ENCODE measurements at regions of chr17 and their contacts with region 1.

Region 1: DNA sequence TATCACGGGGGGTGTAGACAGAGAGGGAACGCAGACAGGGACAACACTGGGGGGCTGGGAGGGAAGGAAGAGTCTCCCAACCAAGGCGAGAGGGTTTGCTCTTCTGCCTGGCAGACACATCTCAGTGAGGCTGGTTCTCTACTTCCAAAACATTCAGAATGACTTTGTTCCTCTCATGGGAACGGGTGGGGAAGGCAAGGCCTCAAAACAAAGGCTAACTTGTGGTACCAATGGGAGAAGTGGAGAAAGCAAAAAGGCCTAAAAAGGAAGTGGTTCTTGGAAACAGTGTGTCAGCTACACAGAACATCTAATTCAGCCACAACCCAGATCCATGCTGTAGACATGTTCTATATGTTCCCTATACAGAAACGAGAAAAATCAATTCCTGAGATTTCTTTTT is 7.5 kb downstream of the FLOT2 start:
- DNase-seq: no peak
- ATAC-seq: no peak
- H3K4me3 Mint-ChIP-seq: peak overlapping the region in 2 of 10 donors; percentile 10 to 14
- H3K27ac Mint-ChIP-seq: peak overlapping the region in 9 of 10 donors; percentile 37 to 98 (median 77)
- H3K4me1 Mint-ChIP-seq: peaks cover 27 to 69% (median 56%) of the 10 kb centered on the region in 4 donors
- H3K27me3 Mint-ChIP-seq: no peaks in the 10 kb centered on the region

Region 2: GRCh38 chr17:28871056-28871579 is 18.9 kb before region 1 on chr17:
- POLR2A ChIA-PET with region 1: interaction called, 20 read pairs
- DNase-seq: peak in 7 of 10 donors; percentile 3 to 58 (median 33)
- ATAC-seq: peak; percentile 100
- H3K4me3 Mint-ChIP-seq: peak overlapping the region in 9 of 10 donors; percentile 48 to 80 (median 61)
- H3K27ac Mint-ChIP-seq: peak overlapping the region; percentile 86 to 100 (median 96)
- H3K4me1 Mint-ChIP-seq: peaks cover 7 to 18% (median 13%) of the 10 kb centered on the region in 4 donors
- H3K27me3 Mint-ChIP-seq: no peaks in the 10 kb centered on the region

Region 3: GRCh38 chr17:28878981-28879380 is 11.0 kb before region 1 on chr17:
- POLR2A ChIA-PET with region 1: interaction called, 16 read pairs
- DNase-seq: no peak
- ATAC-seq: peak; percentile 33 to 38
- H3K4me3 Mint-ChIP-seq: no peak overlapping the region
- H3K27ac Mint-ChIP-seq: peak overlapping the region in 2 of 10 donors; percentile 24 to 53
- H3K4me1 Mint-ChIP-seq: peaks cover 0 to 5% (median under 1%) of the 10 kb centered on the region in 4 donors
- H3K27me3 Mint-ChIP-seq: no peaks in the 10 kb centered on the region

Region 4: DNA sequence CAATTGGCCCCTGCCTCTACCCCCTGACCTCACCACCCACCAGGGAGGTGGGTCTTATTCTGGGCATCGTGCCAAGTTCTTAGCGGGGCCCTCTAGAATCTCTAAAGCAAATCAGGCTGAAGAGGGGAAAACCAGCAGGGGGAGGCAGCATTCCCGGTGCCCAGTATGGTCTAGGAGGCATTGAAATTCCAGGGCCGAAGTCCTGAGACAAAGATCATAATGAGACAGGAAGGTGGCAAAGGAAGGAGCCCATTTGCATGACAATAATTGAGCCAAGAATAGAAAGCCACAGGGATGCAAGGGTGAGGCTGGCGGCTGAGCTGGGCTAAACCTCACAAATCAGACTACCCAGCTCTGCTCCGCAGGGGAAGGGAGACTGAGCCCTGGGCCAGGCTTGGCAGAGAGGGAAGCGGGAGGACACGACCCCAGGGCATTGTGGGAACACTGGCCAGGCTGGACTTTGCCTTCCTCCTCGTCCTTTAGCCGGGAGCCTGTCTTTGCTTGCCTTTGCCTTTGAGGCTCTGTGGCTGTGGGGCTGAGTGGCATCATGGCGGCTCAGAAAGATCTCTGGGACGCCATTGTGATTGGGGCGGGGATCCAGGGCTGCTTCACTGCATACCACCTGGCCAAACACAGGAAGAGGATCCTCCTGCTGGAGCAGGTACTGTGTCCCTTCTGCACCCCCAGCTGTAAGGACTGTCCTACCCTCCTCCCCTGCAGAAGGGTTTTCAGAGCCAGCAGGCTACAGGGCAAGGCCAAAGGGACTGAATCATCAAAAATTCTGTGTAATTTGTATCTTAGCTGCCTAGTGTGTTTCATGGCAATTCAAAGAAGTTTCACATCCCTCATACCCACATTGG is 152.9 kb after region 1 on chr17 and contains the start of gene PIPOX:
- POLR2A ChIA-PET with region 1: no interaction called
- DNase-seq: no peak
- ATAC-seq: no peak
- H3K4me3 Mint-ChIP-seq: no peak within 1 kb of the TSS
- H3K27ac Mint-ChIP-seq: no peak within 1 kb of the TSS
- H3K4me1 Mint-ChIP-seq: peaks cover 5 to 23% (median 7%) of the 10 kb centered on the region in 4 donors
- H3K27me3 Mint-ChIP-seq: peaks cover 3 to 29% (median 12%) of the 10 kb centered on the region in 5 donors
- polyA plus RNA-seq, gene PIPOX: 1.2 to 1.5 (median 1.3) TPM

Measured in naive thymus-derived CD8-positive, alpha-beta T cell (primary cell).